ENCODE measurements at regions of chr11 and their contacts with region 1.

Region 1: DNA sequence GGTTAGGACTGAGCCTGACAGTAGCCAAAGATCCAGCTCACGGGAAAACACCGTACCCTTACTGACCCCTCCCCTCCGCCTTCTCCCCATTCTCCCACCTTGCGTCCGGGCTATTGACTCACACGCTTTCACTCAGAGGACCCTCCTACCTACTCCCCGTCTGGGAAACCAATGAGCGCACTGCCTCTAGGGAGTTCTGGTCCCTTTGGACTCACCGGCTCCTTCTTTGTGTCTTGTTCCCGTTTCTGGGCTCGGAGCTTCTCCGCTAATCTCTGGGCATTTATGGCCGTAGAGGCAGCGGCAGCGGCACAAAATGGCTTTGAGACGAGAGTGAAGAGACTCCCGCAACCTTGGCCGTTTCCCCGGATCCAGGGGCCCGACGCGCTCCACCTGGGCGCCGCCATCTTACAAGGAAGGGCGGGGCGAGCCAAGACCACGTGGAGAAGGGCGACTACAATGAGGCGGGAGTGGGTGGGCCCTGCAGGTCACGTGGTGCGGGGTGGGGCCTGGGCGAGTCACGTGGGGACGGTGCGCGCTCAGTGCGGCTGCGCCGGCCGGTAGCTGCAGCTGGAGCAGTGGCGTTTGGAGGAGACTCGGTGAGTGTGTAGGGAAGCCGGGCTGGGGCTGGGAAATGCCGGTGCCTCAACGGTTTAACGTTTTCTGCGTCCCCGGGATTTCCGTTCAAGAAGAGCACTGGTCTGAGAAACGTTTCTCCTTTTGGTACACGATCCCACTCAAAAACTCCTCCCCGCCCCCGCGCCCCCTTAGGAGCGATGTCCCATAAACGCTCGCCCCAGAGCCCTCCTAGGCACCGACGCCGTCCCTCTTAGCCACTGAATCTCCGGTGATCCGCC is at the starts of genes FAM118B and RPUSD4:
- DNase-seq: peak in 1 of 2 donors; percentile 98
- H3K4me3 ChIP-seq: peak within 1 kb of the TSS; percentile 88 to 95
- H3K27ac ChIP-seq: peak within 1 kb of the TSS; percentile 22
- H3K4me1 ChIP-seq: peaks cover 36% of the 10 kb centered on the region
- H3K27me3 ChIP-seq: no peaks in the 10 kb centered on the region
- CTCF ChIP-seq: no peak
- POLR2A ChIP-seq: peak in 1 of 2 donors; percentile 52
- total RNA-seq, gene FAM118B: 14.7 TPM
- total RNA-seq, gene RPUSD4: 21.6 TPM

Region 2: GRCh38 chr11:126186708-126187529 is 24.5 kb before region 1 on chr11:
- intact Hi-C with region 1: loop called (anchors 1 kb)
- DNase-seq: no peak
- H3K4me3 ChIP-seq: no peak overlapping the region
- H3K27ac ChIP-seq: no peak overlapping the region
- H3K4me1 ChIP-seq: no peaks in the 10 kb centered on the region
- H3K27me3 ChIP-seq: no peaks in the 10 kb centered on the region
- CTCF ChIP-seq: no peak
- POLR2A ChIP-seq: no peak

Region 3: GRCh38 chr11:126268708-126269579 is 57.5 kb after region 1 on chr11 and contains the starts of genes FOXRED1 and SRPRA:
- intact Hi-C with region 1: loop called (anchors 10 kb)
- DNase-seq: peak; percentile 99
- H3K4me3 ChIP-seq: peak within 1 kb of the TSS; percentile 87 to 92
- H3K27ac ChIP-seq: peak within 1 kb of the TSS; percentile 92
- H3K4me1 ChIP-seq: peaks cover 21% of the 10 kb centered on the region
- H3K27me3 ChIP-seq: no peaks in the 10 kb centered on the region
- CTCF ChIP-seq: no peak
- POLR2A ChIP-seq: peak in 1 of 2 donors; percentile 70
- total RNA-seq, gene FOXRED1: 16.7 TPM
- total RNA-seq, gene SRPRA: 64.6 TPM

Region 4: GRCh38 chr11:126585781-126586491 is 374.5 kb after region 1 on chr11:
- intact Hi-C with region 1: no loop called
- DNase-seq: no peak
- H3K4me3 ChIP-seq: peak overlapping the region in 1 of 2 donors; percentile 19
- H3K27ac ChIP-seq: no peak overlapping the region
- H3K4me1 ChIP-seq: peaks cover 5% of the 10 kb centered on the region
- H3K27me3 ChIP-seq: no peaks in the 10 kb centered on the region
- CTCF ChIP-seq: no peak
- POLR2A ChIP-seq: no peak